PC-9 (cell line): ENCODE measurements at regions of chr18 and their contacts with region 1.

Region 1: GRCh38 chr18:64100116-64100922 is 48.6 kb downstream of the LINC00305 start:
- DNase-seq: no peak
- H3K4me3 ChIP-seq: no peak overlapping the region
- H3K27ac ChIP-seq: no peak overlapping the region
- H3K4me1 ChIP-seq: no peaks in the 10 kb centered on the region
- H3K27me3 ChIP-seq: no peaks in the 10 kb centered on the region
- CTCF ChIP-seq: no peak

Region 2: GRCh38 chr18:64330161-64330560 is 229.8 kb after region 1 on chr18:
- CTCF ChIA-PET with region 1: no interaction called
- POLR2A ChIA-PET with region 1: no interaction called
- intact Hi-C with region 1: loop called (anchors 10 kb)
- DNase-seq: peak in 1 of 2 experiments; percentile 0
- H3K4me3 ChIP-seq: no peak overlapping the region
- H3K27ac ChIP-seq: no peak overlapping the region
- H3K4me1 ChIP-seq: no peaks in the 10 kb centered on the region
- H3K27me3 ChIP-seq: no peaks in the 10 kb centered on the region
- CTCF ChIP-seq: no peak; the same call in 1 of the 2 replicates